ENCODE measurements at regions of chr16 and their contacts with region 1.

Region 1: GRCh38 chr16:77211880-77212740 is 12.9 kb downstream of the SYCE1L start:
- DNase-seq: peak; percentile 85
- ATAC-seq: peak; percentile 78
- H3K4me3 Mint-ChIP-seq: peak overlapping the region; percentile 74
- H3K27ac Mint-ChIP-seq: peak overlapping the region; percentile 39
- H3K4me1 Mint-ChIP-seq: peaks cover 26% of the 10 kb centered on the region
- H3K27me3 Mint-ChIP-seq: peaks cover 7% of the 10 kb centered on the region
- CTCF ChIP-seq: no peak

Region 2: GRCh38 chr16:77014441-77014840 is 197.7 kb before region 1 on chr16:
- CTCF ChIA-PET with region 1: no interaction called
- POLR2A ChIA-PET with region 1: no interaction called
- DNase-seq: no peak
- ATAC-seq: no peak
- H3K4me3 Mint-ChIP-seq: no peak overlapping the region
- H3K27ac Mint-ChIP-seq: no peak overlapping the region
- H3K4me1 Mint-ChIP-seq: no peaks in the 10 kb centered on the region
- H3K27me3 Mint-ChIP-seq: peaks cover 4% of the 10 kb centered on the region
- CTCF ChIP-seq: no peak

Region 3: GRCh38 chr16:77157346-77158058 is 54.6 kb before region 1 on chr16:
- CTCF ChIA-PET with region 1: no interaction called
- POLR2A ChIA-PET with region 1: no interaction called
- DNase-seq: no peak
- ATAC-seq: no peak
- H3K4me3 Mint-ChIP-seq: no peak overlapping the region
- H3K27ac Mint-ChIP-seq: no peak overlapping the region
- H3K4me1 Mint-ChIP-seq: no peaks in the 10 kb centered on the region
- H3K27me3 Mint-ChIP-seq: peaks cover 4% of the 10 kb centered on the region; the same call in 1 of the 2 replicates
- CTCF ChIP-seq: no peak

Region 4: GRCh38 chr16:77223184-77223583 is 11.1 kb after region 1 on chr16:
- CTCF ChIA-PET with region 1: interaction called, 16 read pairs
- POLR2A ChIA-PET with region 1: no interaction called
- DNase-seq: peak; percentile 65
- ATAC-seq: peak; percentile 91
- H3K4me3 Mint-ChIP-seq: no peak overlapping the region
- H3K27ac Mint-ChIP-seq: no peak overlapping the region
- H3K4me1 Mint-ChIP-seq: peaks cover 23% of the 10 kb centered on the region
- H3K27me3 Mint-ChIP-seq: no peaks in the 10 kb centered on the region
- CTCF ChIP-seq: peak; percentile 42; the same call in 1 of the 2 replicates